ENCODE measurements at regions of chr16 and their contacts with region 1.

Region 1: DNA sequence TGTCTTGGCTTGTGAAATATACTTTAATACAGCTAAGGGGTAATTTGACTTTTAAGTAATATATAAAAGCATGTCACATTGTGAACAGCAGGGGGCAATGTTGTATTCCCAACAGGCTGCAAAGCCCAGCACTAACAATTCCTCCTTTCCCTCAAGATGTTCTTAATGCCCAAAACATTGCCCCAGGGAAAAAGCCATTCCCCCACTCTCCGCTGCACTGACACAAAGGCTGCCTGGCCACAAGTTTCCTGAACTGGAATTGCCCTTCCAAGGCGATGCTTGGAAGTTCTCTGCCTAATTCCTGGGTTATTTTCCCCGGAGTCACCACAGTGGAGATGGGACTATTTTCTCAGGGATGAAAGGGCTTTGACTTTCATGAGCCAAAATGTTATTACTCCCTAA is 27.2 kb downstream of the CLEC16A start:
- DNase-seq: peak; percentile 47
- ATAC-seq: no peak
- H3K4me3 Mint-ChIP-seq: no peak overlapping the region
- H3K27ac Mint-ChIP-seq: peak overlapping the region; percentile 32
- H3K4me1 Mint-ChIP-seq: peaks cover 31% of the 10 kb centered on the region
- H3K27me3 Mint-ChIP-seq: no peaks in the 10 kb centered on the region
- CTCF ChIP-seq: peak; percentile 95

Region 2: DNA sequence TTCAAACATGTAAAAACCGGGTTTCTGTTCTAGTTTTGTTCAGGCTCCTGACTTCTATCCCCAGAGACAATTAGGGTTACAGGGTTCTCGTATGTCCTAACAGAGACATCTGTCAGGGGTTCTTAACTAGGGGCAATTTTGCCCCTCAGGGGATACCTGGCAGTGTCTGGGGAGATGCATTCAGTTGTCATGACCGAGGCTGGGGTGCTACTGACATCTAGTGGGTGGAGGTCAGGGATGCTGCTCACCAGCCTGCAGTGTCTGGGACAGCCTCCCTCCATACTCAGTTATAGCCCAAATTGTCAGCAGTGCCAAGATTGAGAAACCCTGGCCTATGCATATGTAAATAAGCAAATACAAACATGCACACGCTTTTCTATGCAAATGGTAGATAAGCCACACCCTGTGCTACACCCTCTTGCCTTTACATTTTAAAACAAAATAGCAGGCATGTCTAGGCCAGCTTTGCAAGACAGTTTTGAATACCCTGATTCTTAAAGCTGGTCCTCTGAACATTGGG is 10.2 kb after region 1 on chr16:
- CTCF ChIA-PET with region 1: interaction called, 44 read pairs
- POLR2A ChIA-PET with region 1: interaction called, 3 read pairs
- intact Hi-C with region 1: no loop called
- DNase-seq: peak; percentile 69
- ATAC-seq: peak; percentile 94
- H3K4me3 Mint-ChIP-seq: no peak overlapping the region
- H3K27ac Mint-ChIP-seq: no peak overlapping the region
- H3K4me1 Mint-ChIP-seq: peaks cover 16% of the 10 kb centered on the region
- H3K27me3 Mint-ChIP-seq: no peaks in the 10 kb centered on the region
- CTCF ChIP-seq: peak; percentile 55

Region 3: DNA sequence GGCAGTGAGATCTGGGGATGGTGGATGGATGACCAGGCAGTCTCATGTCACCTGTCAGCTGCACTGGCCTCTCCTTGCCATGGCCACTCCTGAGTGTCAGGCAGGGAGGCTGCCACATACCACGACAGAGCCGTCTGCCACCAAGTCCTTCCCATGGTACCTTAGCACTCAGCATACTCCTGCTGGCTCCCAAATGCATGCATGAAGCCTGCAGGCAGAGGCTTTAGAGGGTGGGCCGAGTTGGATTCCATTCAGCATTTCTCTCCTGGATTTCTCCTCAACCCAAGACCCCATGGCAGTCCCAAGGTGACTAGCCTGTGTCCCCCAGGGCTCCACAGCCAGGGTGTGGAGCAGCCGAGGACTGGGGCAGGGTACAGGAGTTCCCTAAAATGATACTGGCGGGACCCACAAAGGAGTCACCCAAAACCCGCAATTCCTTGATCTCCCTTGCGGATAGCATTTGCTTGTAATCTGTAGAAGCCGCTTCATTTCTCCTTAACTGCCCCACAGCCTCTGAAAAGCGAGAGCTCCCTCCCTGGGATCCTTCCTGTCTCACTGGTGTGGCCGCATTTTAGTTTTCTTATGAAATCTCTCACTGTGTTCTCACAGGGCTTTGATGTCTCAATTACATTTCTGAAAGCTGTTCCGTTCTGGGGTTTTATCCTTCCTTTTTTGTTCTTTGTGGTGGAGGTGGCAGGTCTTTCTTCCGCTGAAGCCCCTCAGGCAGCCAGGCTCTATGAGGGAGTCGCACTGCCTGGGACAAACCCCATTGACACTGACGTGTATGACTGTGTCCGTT is 143.0 kb after region 1 on chr16:
- CTCF ChIA-PET with region 1: interaction called, 4 read pairs
- POLR2A ChIA-PET with region 1: no interaction called
- intact Hi-C with region 1: loop called (anchors 5 kb)
- DNase-seq: peak; percentile 68
- ATAC-seq: peak; percentile 86
- H3K4me3 Mint-ChIP-seq: peak overlapping the region; percentile 55
- H3K27ac Mint-ChIP-seq: peak overlapping the region; percentile 93
- H3K4me1 Mint-ChIP-seq: peaks cover 61% of the 10 kb centered on the region
- H3K27me3 Mint-ChIP-seq: no peaks in the 10 kb centered on the region
- CTCF ChIP-seq: no peak

Region 4: DNA sequence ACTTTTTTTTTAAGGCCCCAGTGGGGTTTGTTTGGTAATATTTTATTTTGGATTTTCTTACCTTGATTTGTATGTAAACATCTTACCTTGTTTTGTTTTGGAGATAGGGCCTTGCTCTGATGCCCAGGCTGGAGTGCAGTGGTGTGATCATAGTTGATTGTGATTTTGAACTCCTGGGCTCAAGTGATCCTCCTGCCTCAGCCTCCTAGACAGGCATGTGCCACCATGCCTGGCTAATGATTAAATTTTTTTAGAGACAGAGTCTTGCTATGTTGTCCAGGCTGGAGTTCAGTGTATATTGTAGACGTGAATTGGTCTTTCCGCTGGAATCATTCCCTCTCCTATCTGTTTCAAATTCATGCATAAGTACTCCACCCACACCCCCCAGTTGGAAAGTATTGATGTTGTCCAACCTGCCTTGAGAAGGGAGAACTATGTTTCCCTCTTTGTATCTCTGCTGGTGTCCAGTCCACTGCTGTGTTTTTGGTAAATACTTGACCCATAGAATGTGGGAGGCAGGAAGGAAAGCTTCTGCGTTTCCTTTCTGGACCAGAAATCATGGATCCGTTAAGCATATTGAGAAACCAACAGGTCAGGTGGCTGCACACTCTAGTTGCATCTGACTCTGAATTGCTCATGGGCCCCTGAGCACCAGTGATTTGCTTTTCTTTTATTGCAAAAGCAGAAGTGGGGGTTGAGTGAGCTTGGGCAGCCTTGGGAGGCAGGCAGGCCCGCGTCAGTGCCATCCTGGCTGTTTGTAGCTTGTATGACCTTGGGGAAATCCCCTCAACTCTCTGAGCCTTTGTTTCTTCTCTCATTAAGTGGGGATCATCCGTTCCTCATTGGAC is 398.7 kb after region 1 on chr16:
- CTCF ChIA-PET with region 1: interaction called, 10 read pairs
- POLR2A ChIA-PET with region 1: no interaction called
- intact Hi-C with region 1: no loop called
- DNase-seq: no peak
- ATAC-seq: peak; percentile 24
- H3K4me3 Mint-ChIP-seq: no peak overlapping the region
- H3K27ac Mint-ChIP-seq: no peak overlapping the region
- H3K4me1 Mint-ChIP-seq: peaks cover 8% of the 10 kb centered on the region
- H3K27me3 Mint-ChIP-seq: no peaks in the 10 kb centered on the region
- CTCF ChIP-seq: no peak

Region 5: GRCh38 chr16:11396241-11397048 is 424.9 kb after region 1 on chr16:
- CTCF ChIA-PET with region 1: interaction called, 11 read pairs
- POLR2A ChIA-PET with region 1: no interaction called
- intact Hi-C with region 1: no loop called
- DNase-seq: peak; percentile 72
- ATAC-seq: peak; percentile 92
- H3K4me3 Mint-ChIP-seq: no peak overlapping the region
- H3K27ac Mint-ChIP-seq: peak overlapping the region; percentile 25
- H3K4me1 Mint-ChIP-seq: no peaks in the 10 kb centered on the region
- H3K27me3 Mint-ChIP-seq: no peaks in the 10 kb centered on the region
- CTCF ChIP-seq: peak; percentile 100

Measured in activated CD8-positive, alpha-beta T cell treated with anti-CD3 and anti-CD28 coated beads for 36 hours (primary cell).